ENCODE measurements at regions of chr7 and their contacts with region 1.

Region 1: DNA sequence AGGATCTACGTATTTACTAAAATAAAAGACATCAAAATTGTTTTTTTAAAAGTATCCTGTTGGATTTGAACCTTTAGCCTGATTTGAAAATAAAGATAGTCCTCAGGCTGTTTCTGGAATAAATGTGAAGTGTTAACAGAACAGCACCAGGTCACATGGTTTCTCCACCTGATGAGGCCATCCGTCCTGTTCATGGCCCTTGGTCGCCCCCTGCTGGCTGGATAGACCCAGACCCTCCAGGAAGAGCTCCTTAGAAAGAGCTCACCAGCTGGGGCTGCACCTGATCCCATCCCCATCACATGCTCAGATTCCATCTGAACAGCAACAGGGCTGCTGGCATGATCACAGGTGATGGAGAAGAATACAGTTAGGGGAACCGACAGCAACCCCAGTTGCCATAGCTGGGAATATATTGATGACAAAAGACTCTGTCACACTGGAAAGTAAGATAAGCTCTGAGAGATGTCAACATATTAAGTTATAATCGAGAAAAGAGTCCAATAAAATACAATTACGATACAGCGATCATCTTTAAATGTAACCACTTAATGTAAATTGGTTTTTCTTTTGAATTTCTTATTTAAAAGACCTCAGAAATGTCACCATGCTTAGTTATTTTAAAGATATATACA is 4.8 kb downstream of the OR2A14 start:
- DNase-seq: peak; percentile 93
- H3K4me3 Mint-ChIP-seq: no peak overlapping the region
- H3K27ac Mint-ChIP-seq: no peak overlapping the region
- H3K4me1 Mint-ChIP-seq: no peaks in the 10 kb centered on the region
- H3K27me3 Mint-ChIP-seq: peaks cover 4% of the 10 kb centered on the region

Region 2: DNA sequence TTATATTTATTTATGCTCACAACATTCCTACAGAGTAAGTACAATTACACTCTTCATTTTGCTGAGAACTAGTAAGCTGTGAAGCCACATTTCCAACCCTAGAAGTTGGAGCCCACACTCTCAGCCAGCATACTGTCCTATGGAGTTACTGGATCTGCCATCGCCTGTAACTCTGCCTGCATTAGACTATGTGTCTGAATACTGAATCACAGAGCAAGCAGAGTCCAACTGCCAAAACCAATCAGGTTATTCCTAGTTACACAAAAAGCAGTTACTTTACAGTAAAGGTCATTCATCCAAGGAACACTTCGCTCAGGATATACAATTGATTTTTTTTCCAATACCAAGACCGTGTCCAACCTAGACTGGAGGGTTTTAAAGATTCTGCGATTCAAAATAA is 391.9 kb before region 1 on chr7:
- CTCF ChIA-PET with region 1: interaction called, 12 read pairs
- DNase-seq: no peak
- H3K4me3 Mint-ChIP-seq: no peak overlapping the region
- H3K27ac Mint-ChIP-seq: no peak overlapping the region
- H3K4me1 Mint-ChIP-seq: peaks cover 9% of the 10 kb centered on the region
- H3K27me3 Mint-ChIP-seq: no peaks in the 10 kb centered on the region

Region 3: DNA sequence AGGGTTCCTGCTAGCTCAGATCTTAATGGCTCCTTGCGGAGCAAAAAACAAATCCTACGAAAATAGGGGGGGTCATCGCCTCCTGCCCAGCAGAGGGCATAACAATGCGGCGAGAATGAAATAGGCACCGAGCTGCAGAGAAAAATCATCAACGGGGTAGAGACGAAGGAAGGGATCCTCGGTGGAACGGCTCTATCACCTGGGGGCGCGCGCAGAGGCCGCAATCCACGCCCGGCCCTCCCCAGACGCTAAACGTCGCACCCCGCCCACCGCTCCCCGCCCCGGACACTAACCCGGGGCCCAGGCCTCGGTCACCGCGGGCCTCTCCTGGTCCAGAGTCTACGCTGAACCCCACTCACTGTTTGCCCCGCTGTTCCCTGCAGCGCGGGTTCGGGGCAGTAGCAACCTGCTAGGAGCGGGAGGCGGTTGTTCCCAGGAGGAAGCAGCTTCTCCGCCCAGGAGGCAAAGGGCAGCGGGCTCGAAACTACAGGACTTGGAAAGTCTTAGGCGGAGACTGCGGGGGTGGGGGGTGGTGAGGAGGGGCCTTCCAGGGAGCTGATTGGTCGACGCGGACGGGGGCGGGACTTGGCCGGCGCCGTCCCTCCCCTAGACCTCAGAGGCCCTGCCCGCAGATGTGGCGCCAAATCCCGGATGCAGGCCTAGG is 226.0 kb before region 1 on chr7 and contains the start of gene TCAF1:
- CTCF ChIA-PET with region 1: interaction called, 10 read pairs
- DNase-seq: peak; percentile 91
- H3K4me3 Mint-ChIP-seq: peak within 1 kb of the TSS; percentile 90
- H3K27ac Mint-ChIP-seq: peak within 1 kb of the TSS; percentile 84
- H3K4me1 Mint-ChIP-seq: peaks cover 27% of the 10 kb centered on the region
- H3K27me3 Mint-ChIP-seq: no peaks in the 10 kb centered on the region

Region 4: DNA sequence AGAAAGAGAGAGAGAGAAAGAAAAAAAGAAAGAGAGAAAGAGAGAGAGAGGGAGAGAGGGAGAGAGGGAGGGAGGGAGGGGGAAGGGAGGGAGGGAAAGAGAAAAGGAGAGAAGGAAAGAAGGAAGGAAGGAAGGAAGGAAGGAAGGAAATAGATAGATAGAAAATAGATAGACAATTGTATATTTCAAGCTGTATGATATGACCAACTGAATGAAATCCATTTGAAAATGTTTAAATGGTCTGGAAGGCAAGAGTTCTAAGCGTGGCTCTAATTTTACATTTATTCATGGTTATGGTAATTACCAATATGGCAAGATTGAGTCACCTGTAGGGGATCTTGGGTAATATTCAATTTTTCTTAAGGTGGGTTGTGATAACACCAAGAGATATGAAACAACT is 31.0 kb after region 1 on chr7:
- CTCF ChIA-PET with region 1: no interaction called
- DNase-seq: no peak
- H3K4me3 Mint-ChIP-seq: no peak overlapping the region
- H3K27ac Mint-ChIP-seq: no peak overlapping the region
- H3K4me1 Mint-ChIP-seq: no peaks in the 10 kb centered on the region
- H3K27me3 Mint-ChIP-seq: peaks cover 14% of the 10 kb centered on the region

Measured in activated naive CD4-positive, alpha-beta T cell treated with anti-CD3 and anti-CD28 coated beads, Interleukin-2, amount 10 ng/mL, durations not matched to agents 7 days and 5 days (primary cell).